Colonic mucosa (tissue), 4 donors: ENCODE measurements at regions of chr1 and their contacts with region 1.

Region 1: DNA sequence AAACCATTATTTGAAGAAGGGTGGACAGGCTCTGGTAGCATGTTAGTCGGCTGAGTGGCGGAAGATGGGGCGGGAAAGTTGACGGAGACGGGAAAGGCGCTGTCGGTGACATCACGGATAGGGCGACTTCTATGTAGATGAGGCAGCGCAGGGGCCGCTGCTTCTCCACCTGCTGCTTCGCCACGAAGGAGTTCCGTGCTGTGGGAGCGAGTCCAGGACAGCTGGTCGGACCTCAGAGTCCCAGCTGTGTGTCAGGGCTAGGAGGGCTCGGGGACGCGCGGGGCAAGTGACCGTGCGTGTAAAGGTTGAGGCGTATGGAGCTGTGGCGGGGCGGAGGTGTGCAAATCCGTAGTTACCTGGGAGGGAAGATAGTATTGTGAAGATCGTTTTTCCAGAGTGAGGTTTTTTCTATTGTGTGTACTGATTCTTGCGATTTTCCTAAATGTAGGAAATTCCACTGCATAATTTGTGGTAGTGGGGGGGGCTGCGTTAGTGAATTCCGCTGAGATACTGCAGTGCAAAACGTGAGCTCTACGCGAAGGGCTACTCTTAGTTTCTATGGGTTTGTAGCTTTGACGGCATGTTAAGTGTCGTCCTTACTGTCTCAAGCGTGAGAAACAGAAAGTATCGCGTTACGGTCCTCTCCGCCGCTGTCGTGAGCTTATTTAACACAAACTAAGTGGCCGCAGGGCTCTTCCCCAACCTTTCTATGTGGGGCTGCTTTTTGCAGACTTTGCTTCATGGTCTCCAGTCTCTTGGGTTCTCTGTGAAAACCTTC is 111.2 kb upstream of the NBPF11 start:
- DNase-seq: peak; percentile 64
- H3K4me3 ChIP-seq: peak overlapping the region; percentile 47
- H3K27ac ChIP-seq: peak overlapping the region; percentile 74
- H3K4me1 ChIP-seq: no peaks in the 10 kb centered on the region
- H3K27me3 ChIP-seq: no peaks in the 10 kb centered on the region
- CTCF ChIP-seq: no peak

Region 2: GRCh38 chr1:148334339-148335130 is 71.2 kb after region 1 on chr1:
- intact Hi-C with region 1: loop called (anchors 10 kb)
- DNase-seq: peak; percentile 93
- H3K4me3 ChIP-seq: peak overlapping the region; percentile 40
- H3K27ac ChIP-seq: peak overlapping the region; percentile 86
- H3K4me1 ChIP-seq: no peaks in the 10 kb centered on the region
- H3K27me3 ChIP-seq: no peaks in the 10 kb centered on the region
- CTCF ChIP-seq: no peak